Right cardiac atrium (tissue), 5 donors: ENCODE measurements at regions of chr17 and their contacts with region 1.

Region 1: DNA sequence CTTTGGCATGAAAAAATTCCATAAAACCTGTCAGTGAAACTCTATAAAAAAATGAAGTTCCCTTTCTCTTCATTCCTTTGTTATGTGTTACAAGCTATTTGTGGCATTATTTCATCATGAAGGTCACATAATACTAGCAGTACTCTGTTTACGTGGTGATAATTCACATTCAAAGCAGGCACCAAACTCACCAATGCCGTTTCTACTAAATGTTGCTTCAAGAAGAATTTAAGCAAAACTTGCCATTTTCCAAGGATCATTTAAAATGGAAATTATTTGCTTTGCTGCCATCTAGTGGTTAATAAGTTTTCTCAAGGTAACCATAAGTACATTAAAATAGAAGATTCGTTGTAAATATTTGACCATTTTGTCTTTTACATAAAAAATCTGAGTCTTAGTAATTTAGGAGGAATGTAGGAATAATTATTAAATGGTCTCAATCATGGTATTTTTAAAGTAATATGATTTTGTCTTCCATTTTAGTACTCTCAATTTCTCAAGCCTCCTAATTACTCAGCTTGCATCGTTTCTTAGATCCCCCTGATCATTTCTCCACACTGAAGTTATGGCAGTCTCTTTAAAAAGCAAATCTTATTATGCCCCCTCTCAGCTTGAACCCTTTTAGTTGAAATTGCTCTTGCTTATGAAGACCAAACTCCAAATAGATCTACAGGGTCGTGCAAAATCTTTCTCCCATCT is 80.8 kb downstream of the OMG start:
- DNase-seq: no peak
- ATAC-seq: no peak
- H3K4me3 ChIP-seq: no peak overlapping the region
- H3K27ac ChIP-seq: no peak overlapping the region
- H3K4me1 ChIP-seq: no peaks in the 10 kb centered on the region
- H3K27me3 ChIP-seq: no peaks in the 10 kb centered on the region

Region 2: DNA sequence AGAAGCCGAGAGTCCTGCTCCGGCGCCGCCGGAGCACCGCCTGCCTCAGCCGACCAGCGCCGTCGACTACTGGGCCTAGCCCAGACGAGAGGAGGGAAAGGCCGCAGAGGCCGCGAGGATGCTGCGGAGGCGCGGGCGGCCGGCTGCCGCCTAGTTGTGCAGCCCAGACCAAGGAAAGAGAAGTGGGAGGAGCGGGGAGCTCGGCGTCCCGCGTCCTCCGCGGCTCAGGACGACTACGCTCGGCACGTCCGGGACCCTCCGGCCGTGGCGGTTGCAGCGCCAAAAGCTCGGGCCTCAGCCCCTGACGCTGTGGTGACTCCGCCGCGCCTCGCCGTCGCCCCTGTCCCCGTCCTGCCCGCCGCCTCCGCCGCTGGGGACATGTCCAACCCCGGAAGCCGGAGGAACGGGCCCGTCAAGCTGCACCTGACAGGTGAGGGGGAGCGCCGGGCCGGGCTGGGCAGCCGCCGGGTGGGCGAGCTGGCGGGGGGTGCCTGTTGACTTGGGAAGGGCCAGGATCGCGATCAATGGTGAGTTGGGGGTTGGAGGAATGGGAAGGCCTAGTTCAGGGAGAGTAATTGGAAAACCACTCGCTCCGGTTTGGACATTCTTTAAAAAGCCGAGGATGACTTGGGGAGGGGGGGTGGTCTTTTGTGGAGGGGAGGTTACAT is 207.7 kb before region 1 on chr17:
- intact Hi-C with region 1: loop called in 3 of 4 experiments (anchors 2 to 10 kb)
- DNase-seq: peak; percentile 65 to 86 (median 84)
- ATAC-seq: peak; percentile 89 to 92
- H3K4me3 ChIP-seq: peak overlapping the region; percentile 57
- H3K27ac ChIP-seq: peak overlapping the region; percentile 54
- H3K4me1 ChIP-seq: no peaks in the 10 kb centered on the region
- H3K27me3 ChIP-seq: no peaks in the 10 kb centered on the region

Region 3: GRCh38 chr17:31015639-31016038 is 200.6 kb before region 1 on chr17:
- intact Hi-C with region 1: loop called in 2 of 4 experiments (anchors 2 to 10 kb)
- DNase-seq: no peak
- ATAC-seq: no peak
- H3K4me3 ChIP-seq: no peak overlapping the region
- H3K27ac ChIP-seq: no peak overlapping the region
- H3K4me1 ChIP-seq: no peaks in the 10 kb centered on the region
- H3K27me3 ChIP-seq: no peaks in the 10 kb centered on the region